CD4-positive, alpha-beta T cell (primary cell): ENCODE measurements at regions of chr12 and their contacts with region 1.

Region 1: GRCh38 chr12:54701940-54702592 is 53.9 kb upstream of the DCD start:
- DNase-seq: peak in 4 of 14 experiments; percentile 34 to 80 (median 72)
- ATAC-seq: peak; percentile 55
- H3K4me3 ChIP-seq: no peak overlapping the region
- H3K4me3 Mint-ChIP-seq: no peak overlapping the region
- H3K27ac ChIP-seq: no peak overlapping the region
- H3K27ac Mint-ChIP-seq: no peak overlapping the region
- H3K4me1 ChIP-seq: no peaks in the 10 kb centered on the region
- H3K4me1 Mint-ChIP-seq: no peaks in the 10 kb centered on the region
- H3K27me3 ChIP-seq: no peaks in the 10 kb centered on the region
- H3K27me3 Mint-ChIP-seq: peaks cover 5% of the 10 kb centered on the region
- CTCF ChIP-seq: peak; percentile 66

Region 2: GRCh38 chr12:54853995-54854566 is 152.0 kb after region 1 on chr12 and contains the start of gene MUCL1:
- CTCF ChIA-PET with region 1: no interaction called
- POLR2A ChIA-PET with region 1: no interaction called
- intact Hi-C with region 1: loop called in 1 of 2 experiments (anchors 1 kb)
- DNase-seq: peak; percentile 46 to 84 (median 64)
- ATAC-seq: peak; percentile 100
- H3K4me3 ChIP-seq: no peak within 1 kb of the TSS
- H3K4me3 Mint-ChIP-seq: no peak within 1 kb of the TSS
- H3K27ac ChIP-seq: no peak within 1 kb of the TSS
- H3K27ac Mint-ChIP-seq: no peak within 1 kb of the TSS
- H3K4me1 ChIP-seq: no peaks in the 10 kb centered on the region
- H3K4me1 Mint-ChIP-seq: no peaks in the 10 kb centered on the region
- H3K27me3 ChIP-seq: no peaks in the 10 kb centered on the region
- H3K27me3 Mint-ChIP-seq: no peaks in the 10 kb centered on the region
- CTCF ChIP-seq: peak; percentile 90
- total RNA-seq, gene MUCL1: not detected

Region 3: DNA sequence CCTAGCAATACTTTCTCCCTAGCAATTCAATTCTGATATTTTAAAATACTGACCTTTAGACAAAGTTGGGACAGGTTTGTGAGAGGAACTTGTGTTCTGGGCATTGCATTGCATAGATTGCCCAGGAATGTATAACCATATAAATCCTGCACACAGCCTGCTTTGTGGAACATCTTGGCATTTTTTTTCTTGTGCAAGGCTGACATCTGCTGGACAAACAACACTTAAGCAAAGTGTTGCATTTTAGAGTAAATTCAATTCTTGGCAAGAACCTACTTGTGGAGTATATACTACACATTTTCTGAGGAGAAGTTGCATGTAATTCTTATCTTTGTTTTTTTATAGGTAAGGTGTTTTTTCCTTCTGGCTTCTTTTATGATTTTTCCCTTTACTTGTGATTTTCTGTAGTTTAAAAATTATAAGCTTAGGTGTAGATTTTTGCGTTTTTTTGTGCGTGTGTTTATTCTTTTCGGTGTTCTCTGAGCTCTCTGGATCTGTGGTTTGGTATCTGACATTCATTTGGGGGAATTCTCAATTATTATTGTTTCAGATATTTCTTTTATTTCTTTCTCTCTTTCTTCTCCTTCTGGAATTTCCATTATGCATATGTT is 256.1 kb after region 1 on chr12:
- CTCF ChIA-PET with region 1: interaction called, 5 read pairs
- POLR2A ChIA-PET with region 1: interaction called, 4 read pairs
- intact Hi-C with region 1: loop called in 1 of 2 experiments (anchors 1 kb)
- DNase-seq: peak in 11 of 14 experiments; percentile 23 to 81 (median 44)
- ATAC-seq: peak; percentile 64
- H3K4me3 ChIP-seq: no peak overlapping the region
- H3K4me3 Mint-ChIP-seq: peak overlapping the region; percentile 0
- H3K27ac ChIP-seq: no peak overlapping the region
- H3K27ac Mint-ChIP-seq: peak overlapping the region; percentile 56
- H3K4me1 ChIP-seq: peaks cover 52% of the 10 kb centered on the region
- H3K4me1 Mint-ChIP-seq: peaks cover 91% of the 10 kb centered on the region
- H3K27me3 ChIP-seq: no peaks in the 10 kb centered on the region
- H3K27me3 Mint-ChIP-seq: no peaks in the 10 kb centered on the region
- CTCF ChIP-seq: peak; percentile 77

Region 4: GRCh38 chr12:54998958-54999510 is 297.0 kb after region 1 on chr12:
- CTCF ChIA-PET with region 1: no interaction called
- POLR2A ChIA-PET with region 1: interaction called, 3 read pairs
- intact Hi-C with region 1: loop called in 1 of 2 experiments (anchors 2 kb)
- DNase-seq: peak in 1 of 14 experiments; percentile 24
- ATAC-seq: no peak
- H3K4me3 ChIP-seq: no peak overlapping the region
- H3K4me3 Mint-ChIP-seq: no peak overlapping the region
- H3K27ac ChIP-seq: no peak overlapping the region
- H3K27ac Mint-ChIP-seq: no peak overlapping the region
- H3K4me1 ChIP-seq: peaks cover 6% of the 10 kb centered on the region
- H3K4me1 Mint-ChIP-seq: peaks cover 24% of the 10 kb centered on the region
- H3K27me3 ChIP-seq: no peaks in the 10 kb centered on the region
- H3K27me3 Mint-ChIP-seq: no peaks in the 10 kb centered on the region
- CTCF ChIP-seq: no peak

Region 5: GRCh38 chr12:55142669-55143565 is 440.9 kb after region 1 on chr12:
- CTCF ChIA-PET with region 1: no interaction called
- POLR2A ChIA-PET with region 1: no interaction called
- intact Hi-C with region 1: loop called (anchors 1 to 2 kb)
- DNase-seq: peak in 12 of 14 experiments; percentile 12 to 69 (median 29)
- ATAC-seq: no peak
- H3K4me3 ChIP-seq: no peak overlapping the region
- H3K4me3 Mint-ChIP-seq: no peak overlapping the region
- H3K27ac ChIP-seq: no peak overlapping the region
- H3K27ac Mint-ChIP-seq: no peak overlapping the region
- H3K4me1 ChIP-seq: no peaks in the 10 kb centered on the region
- H3K4me1 Mint-ChIP-seq: no peaks in the 10 kb centered on the region
- H3K27me3 ChIP-seq: no peaks in the 10 kb centered on the region
- H3K27me3 Mint-ChIP-seq: peaks cover 4% of the 10 kb centered on the region
- CTCF ChIP-seq: peak; percentile 92

Region 6: DNA sequence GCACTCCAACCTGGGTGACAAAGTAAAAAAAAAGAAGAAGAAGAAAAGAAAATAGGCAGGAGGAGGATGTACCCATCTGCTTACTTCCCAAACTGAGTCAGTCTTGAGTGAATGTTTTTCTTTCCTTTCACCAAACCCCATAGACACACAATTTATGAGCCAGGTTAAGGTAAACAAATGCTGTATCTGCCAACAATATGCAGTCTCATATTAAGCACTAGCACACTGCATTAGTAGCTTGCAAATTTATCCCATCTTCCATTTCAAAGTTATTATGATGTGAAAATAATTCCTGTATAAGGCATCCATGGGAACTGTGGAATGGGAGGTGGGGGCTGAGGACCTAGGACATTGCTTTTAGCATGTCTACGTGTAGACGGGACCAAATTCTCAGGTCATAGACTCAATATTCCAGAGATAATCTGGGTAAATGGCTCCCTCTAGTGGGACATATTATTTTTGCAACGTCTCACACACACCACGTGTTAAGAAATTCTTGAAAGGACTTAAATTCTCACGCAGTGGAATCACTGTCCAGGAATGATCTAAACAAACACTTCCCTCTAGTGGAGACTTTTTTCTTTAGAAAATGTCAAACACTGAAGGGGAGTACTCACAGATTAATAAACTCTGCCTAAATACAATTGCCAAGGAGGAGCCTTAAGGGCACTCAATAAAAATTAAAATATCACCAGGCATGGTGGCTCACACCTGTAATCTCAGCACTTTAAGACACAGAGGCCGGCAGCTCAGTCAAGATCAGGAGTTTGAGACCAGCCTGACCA is 917.5 kb after region 1 on chr12:
- CTCF ChIA-PET with region 1: no interaction called
- POLR2A ChIA-PET with region 1: no interaction called
- intact Hi-C with region 1: loop called in 1 of 2 experiments (anchors 5 kb)
- DNase-seq: peak in 10 of 14 experiments; percentile 3 to 85 (median 22)
- ATAC-seq: peak; percentile 96
- H3K4me3 ChIP-seq: no peak overlapping the region
- H3K4me3 Mint-ChIP-seq: no peak overlapping the region
- H3K27ac ChIP-seq: no peak overlapping the region
- H3K27ac Mint-ChIP-seq: no peak overlapping the region
- H3K4me1 ChIP-seq: no peaks in the 10 kb centered on the region
- H3K4me1 Mint-ChIP-seq: peaks cover 6% of the 10 kb centered on the region
- H3K27me3 ChIP-seq: peaks cover 0 to 9% of the 10 kb centered on the region in 2 experiments
- H3K27me3 Mint-ChIP-seq: peaks cover 48% of the 10 kb centered on the region
- CTCF ChIP-seq: peak; percentile 87